ENCODE measurements at regions of chr2 and their contacts with region 1.

Region 1: GRCh38 chr2:28751252-28751955 is at the start of gene PPP1CB:
- DNase-seq: peak; percentile 92 to 99 (median 97)
- ATAC-seq: peak; percentile 86 to 90 (median 88)
- H3K4me3 ChIP-seq: peak within 1 kb of the TSS; percentile 83 to 98
- H3K4me3 Mint-ChIP-seq: peak within 1 kb of the TSS; percentile 94 to 97 (median 95)
- H3K27ac ChIP-seq: peak within 1 kb of the TSS; percentile 97
- H3K27ac Mint-ChIP-seq: peak within 1 kb of the TSS; percentile 95 to 97
- H3K4me1 ChIP-seq: peaks cover 34 to 36% of the 10 kb centered on the region in 2 experiments
- H3K4me1 Mint-ChIP-seq: peaks cover 61 to 70% (median 65%) of the 10 kb centered on the region in 3 donors
- H3K27me3 ChIP-seq: no peaks in the 10 kb centered on the region
- H3K27me3 Mint-ChIP-seq: no peaks in the 10 kb centered on the region
- total RNA-seq, gene PPP1CB: 182 to 233 (median 190) TPM

Region 2: GRCh38 chr2:28613633-28614486 is 137.5 kb before region 1 on chr2:
- CTCF ChIA-PET with region 1: interaction called, 4 to 6 read pairs
- POLR2A ChIA-PET with region 1: interaction called in 1 of 2 experiments, 10 read pairs
- DNase-seq: peak in 14 of 35 experiments; percentile 11 to 50 (median 23)
- ATAC-seq: peak; percentile 40 to 49 (median 46)
- H3K4me3 ChIP-seq: no peak overlapping the region
- H3K4me3 Mint-ChIP-seq: no peak overlapping the region
- H3K27ac ChIP-seq: peak overlapping the region; percentile 71
- H3K27ac Mint-ChIP-seq: no peak overlapping the region
- H3K4me1 ChIP-seq: peaks cover 53 to 54% of the 10 kb centered on the region in 2 experiments
- H3K4me1 Mint-ChIP-seq: peaks cover 28 to 47% (median 42%) of the 10 kb centered on the region in 3 donors
- H3K27me3 ChIP-seq: no peaks in the 10 kb centered on the region
- H3K27me3 Mint-ChIP-seq: no peaks in the 10 kb centered on the region

Region 3: GRCh38 chr2:28870146-28870891 is 118.9 kb after region 1 on chr2 and contains the start of gene TRMT61B:
- CTCF ChIA-PET with region 1: interaction called in 1 of 2 experiments, 5 read pairs
- POLR2A ChIA-PET with region 1: interaction called in 1 of 2 experiments, 12 read pairs
- DNase-seq: peak; percentile 91 to 98 (median 96)
- ATAC-seq: peak; percentile 95 to 97 (median 96)
- H3K4me3 ChIP-seq: peak within 1 kb of the TSS; percentile 76 to 93
- H3K4me3 Mint-ChIP-seq: peak within 1 kb of the TSS; percentile 95 to 99 (median 96)
- H3K27ac ChIP-seq: peak within 1 kb of the TSS; percentile 92
- H3K27ac Mint-ChIP-seq: peak within 1 kb of the TSS; percentile 99 to 100
- H3K4me1 ChIP-seq: peaks cover 17 to 36% of the 10 kb centered on the region in 2 experiments
- H3K4me1 Mint-ChIP-seq: peaks cover 36 to 43% (median 41%) of the 10 kb centered on the region in 3 donors
- H3K27me3 ChIP-seq: peaks cover 0 to 2% of the 10 kb centered on the region in 2 experiments
- H3K27me3 Mint-ChIP-seq: peaks cover 2% of the 10 kb centered on the region in 2 donors
- total RNA-seq, gene TRMT61B: 14.8 to 20.4 (median 17.0) TPM

Measured in T-cell (primary cell).